Heart right ventricle (tissue), 16 donors: ENCODE measurements at regions of chr3 and their contacts with region 1.

Region 1: GRCh38 chr3:121749276-121750086 is at the start of gene GOLGB1:
- DNase-seq: peak; percentile 88 to 97
- ATAC-seq: peak; percentile 97 to 99 (median 99)
- H3K4me3 ChIP-seq: peak within 1 kb of the TSS; percentile 68 to 94 (median 83)
- H3K27ac ChIP-seq: peak within 1 kb of the TSS; percentile 76 to 96 (median 92)
- H3K4me1 ChIP-seq: peaks cover 12 to 48% (median 34%) of the 10 kb centered on the region in 9 donors
- H3K27me3 ChIP-seq: no peaks in the 10 kb centered on the region
- CTCF ChIP-seq: peak in 2 of 9 donors; percentile 9 to 20
- total RNA-seq, gene GOLGB1: 37.1 to 66.8 (median 49.7) TPM

Region 2: DNA sequence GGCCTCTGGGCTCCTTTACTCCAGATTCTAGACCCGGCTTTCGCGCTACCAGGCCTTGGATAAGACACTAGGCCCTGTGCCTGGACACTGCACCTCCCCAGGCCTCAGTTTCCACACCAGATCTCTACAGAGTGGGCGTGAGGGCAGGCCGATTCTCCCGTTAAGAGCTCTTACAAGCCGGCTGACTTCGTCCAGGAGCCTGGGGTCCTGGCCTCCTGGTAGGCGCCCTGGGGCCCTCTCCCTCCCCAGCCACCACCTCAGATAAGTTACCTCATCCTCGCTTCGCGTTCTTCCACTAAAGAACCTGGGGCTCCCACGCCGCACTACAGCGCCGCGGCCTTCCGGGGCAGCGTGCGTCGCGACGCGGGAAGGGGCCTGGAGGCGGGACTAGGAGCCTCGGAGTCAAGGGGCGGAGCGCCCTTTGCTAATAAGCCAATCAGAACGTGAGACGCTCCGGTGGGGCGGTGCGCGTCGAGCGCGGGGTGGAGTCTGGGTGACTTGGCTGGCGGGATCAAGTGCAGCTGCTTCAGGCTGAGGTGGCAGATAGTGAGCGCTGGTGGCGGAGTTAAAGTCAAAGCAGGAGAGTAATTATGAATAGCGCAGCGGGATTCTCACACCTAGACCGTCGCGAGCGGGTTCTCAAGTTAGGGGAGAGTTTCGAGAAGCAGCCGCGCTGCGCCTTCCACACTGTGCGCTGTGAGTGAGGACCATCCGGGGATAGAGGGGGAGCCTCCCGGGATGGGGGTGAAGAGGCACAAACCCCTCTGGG is 85.4 kb after region 1 on chr3 and contains the starts of genes EAF2 and IQCB1:
- intact Hi-C with region 1: loop called in 1 of 10 experiments (anchors 5 kb)
- DNase-seq: peak; percentile 96
- ATAC-seq: peak; percentile 100
- H3K4me3 ChIP-seq: peak within 1 kb of the TSS; percentile 57 to 91 (median 74)
- H3K27ac ChIP-seq: peak within 1 kb of the TSS in 9 of 10 donors; percentile 57 to 90 (median 74)
- H3K4me1 ChIP-seq: peaks cover 0 to 25% (median 19%) of the 10 kb centered on the region in 9 donors
- H3K27me3 ChIP-seq: no peaks in the 10 kb centered on the region
- CTCF ChIP-seq: peak in 3 of 9 donors; percentile 21 to 36 (median 33)
- total RNA-seq, gene EAF2: 1.8 to 7.0 (median 3.3) TPM
- total RNA-seq, gene IQCB1: 4.9 to 9.9 (median 7.1) TPM